ENCODE measurements at regions of chr7 and their contacts with region 1.

Region 1: GRCh38 chr7:47405921-47406792 is 175.8 kb downstream of the TNS3 start:
- DNase-seq: peak; percentile 88
- H3K4me3 ChIP-seq: peak overlapping the region in 1 of 4 donors; percentile 1
- H3K27ac ChIP-seq: peak overlapping the region; percentile 60 to 87 (median 80)
- H3K4me1 ChIP-seq: peaks cover 0 to 65% (median 55%) of the 10 kb centered on the region in 4 donors
- H3K27me3 ChIP-seq: no peaks in the 10 kb centered on the region
- CTCF ChIP-seq: no peak
- EP300 ChIP-seq: peak in 3 of 4 donors; percentile 2 to 9 (median 3)
- POLR2A ChIP-seq: no peak

Region 2: GRCh38 chr7:47327698-47328391 is 78.3 kb before region 1 on chr7:
- intact Hi-C with region 1: loop called (anchors 5 kb)
- DNase-seq: peak; percentile 92
- H3K4me3 ChIP-seq: peak overlapping the region; percentile 11 to 45 (median 36)
- H3K27ac ChIP-seq: peak overlapping the region; percentile 71 to 86 (median 78)
- H3K4me1 ChIP-seq: peaks cover 0 to 73% (median 64%) of the 10 kb centered on the region in 4 donors
- H3K27me3 ChIP-seq: no peaks in the 10 kb centered on the region
- CTCF ChIP-seq: no peak
- EP300 ChIP-seq: no peak
- POLR2A ChIP-seq: no peak

Measured in sigmoid colon (tissue), 7 donors.